Right ventricle myocardium superior (tissue), 1 donor: ENCODE measurements at regions of chr16 and their contacts with region 1.

Region 1: DNA sequence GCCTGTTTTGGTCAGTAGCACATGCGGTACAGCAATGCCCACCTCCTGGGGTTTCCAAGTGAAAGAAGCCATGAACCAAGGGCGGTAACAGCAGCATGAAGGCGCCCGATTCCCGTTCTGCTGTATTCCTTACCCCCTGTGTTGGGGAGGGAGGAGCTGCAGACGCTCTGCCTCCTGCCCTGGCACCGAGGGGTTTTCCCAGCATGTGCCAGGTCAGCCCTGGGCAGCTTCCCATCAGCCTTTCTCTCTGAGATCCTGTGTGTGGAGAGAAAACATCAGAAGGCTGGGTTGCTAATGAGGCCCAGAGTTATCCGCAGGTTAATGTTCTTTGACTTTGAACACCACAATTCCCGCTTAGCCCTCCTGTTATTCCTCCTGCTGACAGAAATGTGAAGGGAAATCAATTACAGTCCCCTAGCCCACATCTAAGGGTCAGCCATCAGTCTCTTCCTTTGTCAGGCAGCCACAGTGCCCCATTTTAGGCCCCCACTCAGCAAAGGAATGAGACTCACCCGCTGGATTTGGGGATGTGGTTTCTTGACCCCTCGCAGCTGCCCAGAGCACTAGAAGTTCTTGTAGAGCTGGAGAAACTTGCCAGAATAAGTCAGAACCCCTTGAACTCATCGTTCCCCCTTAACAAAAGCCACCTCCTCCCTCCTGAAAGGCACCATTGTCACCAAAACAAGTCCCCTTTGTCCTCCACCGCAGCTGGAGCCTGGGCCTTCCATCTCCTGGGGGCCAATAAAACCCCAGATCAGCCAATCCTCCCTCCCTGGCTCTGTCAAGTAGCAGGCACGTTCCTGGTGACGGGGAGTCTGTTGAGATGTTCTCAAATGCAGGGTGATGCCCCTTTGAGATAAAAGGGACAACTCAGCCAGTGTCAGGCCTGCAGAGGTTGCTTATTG is 168.5 kb downstream of the KATNIP start:
- DNase-seq: no peak
- ATAC-seq: no peak

Region 2: DNA sequence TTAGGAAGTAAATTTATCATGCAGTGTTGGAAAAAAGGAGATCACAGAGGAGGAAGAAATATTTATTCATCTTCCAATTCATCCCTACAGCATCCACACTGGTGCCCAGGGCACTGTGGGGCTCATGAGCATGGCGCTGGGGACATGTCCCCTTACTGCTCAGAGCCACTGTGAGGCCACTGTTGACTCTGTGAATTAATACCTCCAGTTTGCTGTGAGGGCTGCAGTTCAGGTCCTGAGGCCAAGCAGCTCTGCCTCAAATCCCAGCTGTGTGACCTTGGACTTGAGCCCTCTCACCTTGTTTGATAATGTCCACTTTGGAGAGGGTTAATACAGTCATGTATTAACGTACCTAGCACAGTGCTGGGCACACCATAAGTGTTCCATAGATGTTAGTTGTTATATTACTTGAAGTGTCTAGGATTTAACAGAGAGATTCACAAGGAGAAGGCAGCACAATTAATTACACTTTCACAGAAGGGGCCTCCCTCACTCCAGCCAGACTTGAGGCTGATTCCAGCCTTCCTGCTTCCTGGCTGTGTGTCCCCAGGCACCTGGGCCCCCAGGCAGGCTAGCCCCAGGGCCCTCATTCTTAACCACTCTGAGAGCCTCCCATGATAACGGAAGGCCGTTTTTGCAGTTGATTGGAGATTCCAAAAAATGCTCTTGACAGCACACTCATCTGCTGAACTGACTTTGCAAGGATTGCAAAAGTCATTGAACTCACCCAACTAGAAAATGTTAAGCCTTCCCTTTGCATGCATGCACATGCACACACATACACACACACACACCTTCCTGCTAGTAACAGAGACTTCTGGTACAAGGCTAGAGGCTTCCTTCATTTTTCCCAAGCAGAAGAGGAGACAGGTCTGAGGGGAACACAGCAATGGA is 139.1 kb before region 1 on chr16:
- intact Hi-C with region 1: loop called (anchors 10 kb)
- DNase-seq: no peak
- ATAC-seq: no peak

Region 3: DNA sequence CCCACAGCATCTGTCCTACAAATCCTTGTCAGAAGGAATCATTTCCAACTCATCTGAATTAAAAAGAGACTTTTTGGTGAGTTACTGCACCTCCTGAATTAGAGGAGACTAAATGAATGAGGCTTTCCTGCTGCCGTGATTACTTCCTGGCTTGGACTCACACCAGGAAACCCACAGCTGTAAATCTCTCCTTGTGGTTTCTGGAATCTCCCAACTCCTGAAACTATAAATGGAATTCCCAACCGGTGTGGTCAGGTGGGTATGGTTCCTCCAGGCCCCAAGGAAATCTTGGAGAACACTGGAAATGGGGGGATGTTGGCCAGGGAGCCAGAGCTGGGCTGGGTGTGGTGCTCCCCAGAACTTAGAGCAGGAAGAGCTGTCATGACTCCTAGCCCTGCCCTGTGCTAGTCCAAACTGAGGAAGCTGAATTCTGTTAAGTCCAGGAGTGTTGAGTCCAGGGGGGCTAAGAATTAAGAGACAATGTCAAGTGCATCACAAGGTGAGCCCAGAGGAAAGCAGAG is 128.6 kb after region 1 on chr16:
- intact Hi-C with region 1: no loop called
- DNase-seq: no peak
- ATAC-seq: no peak